Panc1 (cell line): ENCODE measurements at regions of chr2 and their contacts with region 1.

Region 1: DNA sequence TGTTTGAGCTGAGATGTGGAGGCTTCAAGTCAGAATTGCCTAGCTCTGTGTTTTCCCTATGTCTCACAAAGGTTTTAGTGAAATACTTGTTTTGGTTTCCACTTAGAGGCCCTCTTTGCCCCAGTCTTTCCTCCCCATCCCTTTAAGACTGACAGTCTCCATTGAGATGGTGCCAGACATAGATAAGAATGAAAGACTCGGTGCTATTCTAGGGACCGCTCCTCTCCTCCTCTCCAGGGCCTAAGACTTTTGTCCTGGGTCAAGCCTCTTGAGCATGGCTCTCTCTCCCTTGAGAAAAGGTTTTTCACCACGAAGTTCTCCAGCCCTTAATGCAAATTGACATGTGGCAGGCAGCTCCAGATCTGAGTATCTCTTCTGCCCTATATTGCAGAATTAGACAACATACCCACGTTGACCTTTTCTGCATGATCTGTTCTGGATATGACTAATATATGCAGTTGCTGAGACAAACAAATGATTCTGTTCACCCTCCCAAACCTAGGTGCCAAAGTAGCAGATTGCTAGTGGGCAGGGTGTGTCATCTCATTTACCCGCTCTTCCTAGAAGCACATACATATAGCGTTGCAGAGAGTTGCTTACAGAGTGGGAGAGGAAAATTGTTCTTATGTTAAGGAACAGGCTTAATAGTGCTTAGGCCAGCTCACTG is 47.5 kb upstream of the ACSL3 start:
- DNase-seq: no peak
- ATAC-seq: no peak
- H3K4me3 ChIP-seq: no peak overlapping the region
- H3K27ac ChIP-seq: no peak overlapping the region
- H3K4me1 ChIP-seq: no peaks in the 10 kb centered on the region
- H3K27me3 ChIP-seq: no peaks in the 10 kb centered on the region; the same call in 1 of the 2 replicates
- CTCF ChIP-seq: no peak

Region 2: GRCh38 chr2:222797261-222797660 is 16.0 kb before region 1 on chr2:
- CTCF ChIA-PET with region 1: no interaction called
- POLR2A ChIA-PET with region 1: no interaction called
- in situ Hi-C with region 1: no loop called
- intact Hi-C with region 1: no loop called
- DNase-seq: no peak
- ATAC-seq: no peak
- H3K4me3 ChIP-seq: no peak overlapping the region
- H3K27ac ChIP-seq: no peak overlapping the region
- H3K4me1 ChIP-seq: no peaks in the 10 kb centered on the region
- H3K27me3 ChIP-seq: no peaks in the 10 kb centered on the region
- CTCF ChIP-seq: peak; percentile 52; the same call in 1 of the 2 replicates

Region 3: GRCh38 chr2:222861411-222862105 is 48.2 kb after region 1 on chr2:
- CTCF ChIA-PET with region 1: no interaction called
- POLR2A ChIA-PET with region 1: interaction called, 16 read pairs
- in situ Hi-C with region 1: no loop called
- intact Hi-C with region 1: no loop called
- DNase-seq: no peak
- ATAC-seq: peak; percentile 74
- H3K4me3 ChIP-seq: peak overlapping the region; percentile 89 to 91
- H3K27ac ChIP-seq: peak overlapping the region; percentile 85
- H3K4me1 ChIP-seq: peaks cover 50% of the 10 kb centered on the region
- H3K27me3 ChIP-seq: no peaks in the 10 kb centered on the region
- CTCF ChIP-seq: no peak; the same call in 1 of the 2 replicates